ENCODE measurements at regions of chr10 and their contacts with region 1.

Region 1: GRCh38 chr10:132458593-132459300 is 61.7 kb downstream of the PWWP2B start:
- DNase-seq: peak; percentile 91
- H3K4me3 ChIP-seq: peak overlapping the region; percentile 4
- H3K27ac ChIP-seq: peak overlapping the region; percentile 87
- H3K4me1 ChIP-seq: peaks cover 27% of the 10 kb centered on the region
- H3K27me3 ChIP-seq: no peaks in the 10 kb centered on the region
- CTCF ChIP-seq: peak; percentile 97

Region 2: GRCh38 chr10:132536971-132537712 is 78.4 kb after region 1 on chr10:
- intact Hi-C with region 1: loop called (anchors 5 kb)
- DNase-seq: peak; percentile 100
- H3K4me3 ChIP-seq: peak overlapping the region; percentile 55
- H3K27ac ChIP-seq: peak overlapping the region; percentile 77
- H3K4me1 ChIP-seq: peaks cover 11% of the 10 kb centered on the region
- H3K27me3 ChIP-seq: no peaks in the 10 kb centered on the region
- CTCF ChIP-seq: no peak

Region 3: GRCh38 chr10:132637477-132638129 is 178.9 kb after region 1 on chr10:
- intact Hi-C with region 1: loop called (anchors 1 kb)
- DNase-seq: no peak
- H3K4me3 ChIP-seq: no peak overlapping the region
- H3K27ac ChIP-seq: no peak overlapping the region
- H3K4me1 ChIP-seq: peaks cover 12% of the 10 kb centered on the region
- H3K27me3 ChIP-seq: no peaks in the 10 kb centered on the region
- CTCF ChIP-seq: peak; percentile 67